ENCODE measurements at regions of chr6 and their contacts with region 1.

Region 1: GRCh38 chr6:3124667-3125066 is 6.2 kb downstream of the BPHL start:
- DNase-seq: no peak
- ATAC-seq: no peak

Region 2: DNA sequence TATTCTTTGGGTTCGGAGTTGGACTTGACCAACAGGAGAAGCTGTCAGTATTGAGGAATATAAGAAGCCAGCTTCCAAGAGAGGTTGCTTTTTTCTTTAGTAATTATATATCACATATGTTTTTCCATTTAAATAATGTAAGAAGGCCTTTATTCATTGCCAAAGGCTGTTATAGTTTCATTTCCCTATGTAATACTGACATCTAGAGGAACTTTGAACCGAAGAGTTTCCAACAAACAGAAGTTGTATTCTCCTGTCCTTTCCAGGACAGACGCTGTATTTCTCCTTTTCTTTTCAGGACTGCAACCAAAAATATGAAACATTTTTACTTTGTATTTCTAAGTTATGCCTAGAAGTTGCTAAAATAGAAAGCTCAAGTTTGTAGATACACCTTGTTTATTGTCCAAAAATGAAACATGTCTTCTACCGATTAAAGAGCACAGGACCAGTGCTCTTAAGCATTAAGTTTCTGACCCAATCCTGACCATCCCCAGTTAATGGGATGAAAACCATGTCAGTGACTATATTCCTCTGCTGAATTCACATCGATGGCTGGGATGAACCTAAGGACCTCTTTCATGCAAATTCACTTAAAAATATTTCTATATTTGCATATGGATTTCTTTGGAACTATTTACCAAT is 429.1 kb before region 1 on chr6:
- intact Hi-C with region 1: no loop called
- DNase-seq: no peak
- ATAC-seq: peak; percentile 53

Region 3: DNA sequence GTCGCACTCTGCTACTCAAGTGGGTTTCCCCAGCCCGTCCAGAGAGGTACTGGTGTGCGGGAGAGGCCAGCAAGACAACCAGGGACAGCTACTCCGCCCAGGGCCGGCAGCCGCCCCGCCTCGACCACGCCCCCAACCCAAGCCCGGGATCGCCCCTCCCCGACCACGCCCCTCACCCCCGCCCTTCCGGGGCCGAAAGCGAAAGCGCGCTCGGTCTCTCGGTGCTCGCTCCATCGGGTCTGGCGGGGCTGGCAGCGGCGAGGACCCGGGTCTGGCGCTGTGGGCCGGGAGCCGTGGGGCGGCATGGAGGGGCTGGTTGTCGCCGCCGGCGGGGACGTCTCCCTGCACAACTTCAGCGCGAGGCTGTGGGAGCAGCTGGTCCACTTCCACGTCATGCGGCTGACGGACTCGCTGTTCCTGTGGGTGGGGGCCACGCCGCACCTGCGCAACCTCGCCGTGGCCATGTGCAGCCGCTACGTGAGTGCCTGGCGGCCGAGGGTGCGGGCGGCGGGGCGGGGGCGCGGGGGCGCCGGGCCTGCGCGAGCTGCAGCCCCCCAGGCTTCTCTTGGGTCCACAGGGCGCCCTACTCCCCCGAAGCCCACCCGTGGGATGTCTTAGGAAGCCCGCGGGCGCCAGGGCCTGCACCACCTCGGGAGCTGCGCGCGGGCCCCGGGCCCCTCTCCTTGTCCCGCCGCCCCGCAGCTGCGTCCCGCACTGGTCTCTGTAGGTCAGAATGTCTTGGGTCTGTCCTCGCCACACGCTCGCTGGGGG is 134.2 kb after region 1 on chr6 and contains the start of gene PSMG4:
- intact Hi-C with region 1: loop called (anchors 5 kb)
- DNase-seq: peak; percentile 99
- ATAC-seq: peak; percentile 98
- total RNA-seq, gene PSMG4: 21.2 TPM

Region 4: DNA sequence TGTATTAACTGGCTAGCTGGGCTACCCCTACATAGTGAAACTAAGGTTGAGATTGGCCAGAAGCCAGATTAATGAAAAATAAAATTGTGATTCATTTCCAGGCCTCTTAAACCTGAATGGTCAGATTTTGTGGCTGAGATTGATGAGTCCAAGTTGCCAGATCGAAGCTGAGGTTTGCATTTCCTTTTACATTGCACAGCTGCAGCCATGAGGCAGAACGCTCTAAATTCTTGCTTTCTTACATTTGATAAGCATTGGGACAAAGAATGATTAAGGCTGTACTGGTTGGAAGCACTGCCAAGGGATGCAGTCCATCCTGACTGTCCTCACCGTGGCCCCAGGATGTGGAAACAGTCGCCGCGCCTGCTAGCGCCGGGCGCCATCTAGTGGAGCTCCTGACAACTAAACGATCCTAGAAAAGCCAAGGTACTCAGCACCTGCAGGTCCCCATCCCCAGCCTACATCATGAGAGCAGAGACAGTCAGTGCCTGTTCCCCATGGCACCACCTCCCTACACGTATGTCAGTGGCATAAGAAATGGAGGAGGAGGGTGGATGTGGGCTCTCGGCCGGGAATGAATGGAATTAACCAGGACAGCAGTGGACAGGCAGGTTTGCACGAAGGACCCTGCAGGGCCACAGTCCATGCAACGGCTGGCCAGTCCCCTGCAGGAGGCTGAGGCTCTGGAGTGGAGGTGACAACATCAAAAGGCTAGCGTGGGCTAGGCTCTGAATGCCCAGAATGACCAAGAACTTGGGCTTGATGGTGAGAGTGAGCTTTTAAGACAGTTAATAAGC is 607.9 kb after region 1 on chr6:
- intact Hi-C with region 1: loop called (anchors 10 kb)
- DNase-seq: peak; percentile 83
- ATAC-seq: peak; percentile 85

Measured in sciatic nerve (tissue), 2 donors.